Psoas muscle (tissue), 8 donors: ENCODE measurements at regions of chr18 and their contacts with region 1.

Region 1: GRCh38 chr18:21111341-21112139 is at the start of gene ROCK1:
- DNase-seq: peak; percentile 99 to 100
- ATAC-seq: peak; percentile 92 to 97 (median 94)
- H3K4me3 ChIP-seq: peak within 1 kb of the TSS; percentile 98
- H3K27ac ChIP-seq: peak within 1 kb of the TSS; percentile 94
- H3K4me1 ChIP-seq: peaks cover 40% of the 10 kb centered on the region
- H3K27me3 ChIP-seq: no peaks in the 10 kb centered on the region
- CTCF ChIP-seq: no peak
- total RNA-seq, gene ROCK1: 10.4 to 14.6 (median 12.3) TPM

Region 2: DNA sequence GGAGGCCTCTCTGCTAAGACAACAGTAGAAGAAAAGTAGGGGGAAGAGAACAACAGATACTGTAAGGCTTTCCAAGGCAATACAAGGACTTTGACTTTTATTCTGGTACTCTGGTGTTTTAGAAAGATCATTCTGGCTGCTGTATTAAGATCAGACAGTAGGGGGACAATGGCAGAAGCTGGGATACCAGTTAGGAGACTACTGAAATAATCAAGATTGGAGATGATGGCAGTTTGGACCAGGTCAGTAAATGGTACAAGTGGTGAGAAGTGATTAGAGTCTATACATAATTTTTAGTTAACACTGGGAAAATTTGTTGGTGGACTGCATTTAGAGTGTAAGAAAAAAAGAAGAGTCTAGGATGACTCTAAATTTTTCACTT is 139.7 kb before region 1 on chr18:
- intact Hi-C with region 1: loop called in 1 of 2 experiments (anchors 10 kb)
- DNase-seq: no peak
- ATAC-seq: no peak
- H3K4me3 ChIP-seq: no peak overlapping the region
- H3K27ac ChIP-seq: no peak overlapping the region
- H3K4me1 ChIP-seq: no peaks in the 10 kb centered on the region
- H3K27me3 ChIP-seq: no peaks in the 10 kb centered on the region
- CTCF ChIP-seq: peak; percentile 27

Region 3: DNA sequence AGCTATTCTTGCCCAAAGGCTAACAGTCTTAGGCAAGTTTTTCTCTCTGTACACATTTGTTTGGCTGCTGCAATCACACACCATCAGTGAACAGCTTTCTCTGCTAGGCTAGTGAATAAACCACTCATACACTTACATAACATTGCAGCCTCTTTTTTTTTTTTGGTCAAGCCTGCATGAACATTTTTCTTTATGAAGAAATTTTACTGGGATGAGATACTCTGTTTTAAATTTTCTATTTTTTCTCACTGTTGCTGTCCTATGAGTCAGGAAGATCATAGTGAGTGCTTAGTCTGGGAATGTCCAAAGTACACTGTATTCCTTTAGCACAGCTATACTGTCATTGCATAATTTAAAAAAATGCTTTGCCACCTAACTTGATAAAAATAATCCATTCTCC is 58.4 kb before region 1 on chr18:
- intact Hi-C with region 1: loop called in 1 of 2 experiments (anchors 5 kb)
- DNase-seq: no peak
- ATAC-seq: peak in 3 of 4 donors; percentile 83 to 88 (median 84)
- H3K4me3 ChIP-seq: no peak overlapping the region
- H3K27ac ChIP-seq: no peak overlapping the region
- H3K4me1 ChIP-seq: peaks cover 34% of the 10 kb centered on the region
- H3K27me3 ChIP-seq: no peaks in the 10 kb centered on the region
- CTCF ChIP-seq: no peak

Region 4: DNA sequence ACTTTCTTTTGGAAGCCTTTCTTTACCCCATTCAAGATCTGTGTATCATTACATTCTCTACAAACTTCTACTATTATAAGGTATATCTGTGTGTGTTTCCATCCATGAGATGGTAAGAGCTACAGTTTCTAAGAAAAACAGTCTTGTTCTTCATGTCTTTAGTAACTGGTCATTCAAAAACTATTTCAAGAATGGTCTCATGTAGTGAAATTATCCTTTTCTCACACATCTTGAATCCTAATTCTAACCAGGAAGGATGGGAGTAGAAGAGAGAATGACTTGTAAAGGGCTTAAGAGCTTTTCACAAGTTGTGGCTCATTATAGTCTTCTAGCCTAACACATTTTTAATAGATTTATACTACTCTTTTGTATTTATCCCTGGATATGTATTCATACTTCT is 47.2 kb before region 1 on chr18:
- intact Hi-C with region 1: loop called in 1 of 2 experiments (anchors 10 kb)
- DNase-seq: no peak
- ATAC-seq: no peak
- H3K4me3 ChIP-seq: no peak overlapping the region
- H3K27ac ChIP-seq: no peak overlapping the region
- H3K4me1 ChIP-seq: no peaks in the 10 kb centered on the region
- H3K27me3 ChIP-seq: no peaks in the 10 kb centered on the region
- CTCF ChIP-seq: no peak

Region 5: DNA sequence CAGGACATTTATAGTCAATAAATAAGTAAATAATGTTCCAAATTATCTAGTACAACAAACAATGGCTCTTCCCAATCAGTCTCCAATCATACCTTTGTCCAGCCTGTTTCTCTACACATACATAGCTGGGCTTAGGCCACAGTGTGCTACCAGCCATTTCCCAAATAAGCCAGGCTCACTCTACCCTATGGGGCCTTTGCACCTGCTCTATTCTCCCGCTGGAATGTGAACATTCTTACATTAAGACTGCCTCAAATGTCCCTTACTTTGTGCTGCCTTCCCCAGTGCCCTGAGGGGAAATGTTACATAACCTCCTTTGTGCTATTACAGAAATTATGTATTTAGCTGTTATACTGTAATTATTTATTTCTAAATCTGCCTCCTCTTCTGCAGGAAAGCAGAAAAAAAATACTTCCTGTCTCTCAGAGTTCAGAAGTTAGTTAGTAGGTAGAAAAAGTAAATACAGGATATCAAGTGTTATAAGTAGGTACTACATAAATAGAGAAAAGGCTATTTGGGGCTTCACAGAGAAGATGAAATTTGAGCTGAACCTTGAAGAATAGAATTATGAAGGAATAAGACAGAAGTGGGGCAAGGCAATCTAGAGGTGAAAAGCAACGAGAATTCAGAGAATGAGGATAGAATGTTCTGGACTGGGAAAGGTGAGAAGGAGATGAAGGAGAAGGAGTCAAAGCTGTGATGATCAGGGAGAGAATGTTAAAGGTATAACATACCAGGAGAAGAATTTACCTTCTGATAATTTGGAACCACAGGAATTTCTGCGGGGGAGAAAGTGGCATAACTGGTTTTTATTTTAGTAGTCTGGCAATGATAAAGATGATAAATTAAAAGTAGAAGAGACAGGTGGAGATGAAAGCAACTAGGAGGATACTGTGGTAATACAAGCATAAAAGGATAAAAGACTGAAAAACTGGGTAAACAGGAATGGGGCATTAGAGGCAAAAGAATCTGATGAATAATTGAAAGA is 36.9 kb before region 1 on chr18:
- intact Hi-C with region 1: loop called (anchors 5 to 10 kb)
- DNase-seq: no peak
- ATAC-seq: no peak
- H3K4me3 ChIP-seq: no peak overlapping the region
- H3K27ac ChIP-seq: no peak overlapping the region
- H3K4me1 ChIP-seq: peaks cover 40% of the 10 kb centered on the region
- H3K27me3 ChIP-seq: no peaks in the 10 kb centered on the region
- CTCF ChIP-seq: no peak

Region 6: GRCh38 chr18:21179590-21180220 is 68.2 kb after region 1 on chr18:
- intact Hi-C with region 1: loop called in 1 of 2 experiments (anchors 10 kb)
- DNase-seq: no peak
- ATAC-seq: peak in 2 of 4 donors; percentile 67
- H3K4me3 ChIP-seq: no peak overlapping the region
- H3K27ac ChIP-seq: no peak overlapping the region
- H3K4me1 ChIP-seq: no peaks in the 10 kb centered on the region
- H3K27me3 ChIP-seq: no peaks in the 10 kb centered on the region
- CTCF ChIP-seq: peak; percentile 62